Esophagus muscularis mucosa (tissue), 4 donors: ENCODE measurements at regions of chr2 and their contacts with region 1.

Region 1: GRCh38 chr2:167127135-167127534 is 238.9 kb downstream of the XIRP2 start:
- DNase-seq: no peak
- H3K4me3 ChIP-seq: no peak overlapping the region
- H3K27ac ChIP-seq: no peak overlapping the region
- H3K4me1 ChIP-seq: no peaks in the 10 kb centered on the region
- H3K27me3 ChIP-seq: no peaks in the 10 kb centered on the region
- CTCF ChIP-seq: peak in 1 of 3 experiments; percentile 14
- EP300 ChIP-seq: no peak
- POLR2A ChIP-seq: no peak

Region 2: DNA sequence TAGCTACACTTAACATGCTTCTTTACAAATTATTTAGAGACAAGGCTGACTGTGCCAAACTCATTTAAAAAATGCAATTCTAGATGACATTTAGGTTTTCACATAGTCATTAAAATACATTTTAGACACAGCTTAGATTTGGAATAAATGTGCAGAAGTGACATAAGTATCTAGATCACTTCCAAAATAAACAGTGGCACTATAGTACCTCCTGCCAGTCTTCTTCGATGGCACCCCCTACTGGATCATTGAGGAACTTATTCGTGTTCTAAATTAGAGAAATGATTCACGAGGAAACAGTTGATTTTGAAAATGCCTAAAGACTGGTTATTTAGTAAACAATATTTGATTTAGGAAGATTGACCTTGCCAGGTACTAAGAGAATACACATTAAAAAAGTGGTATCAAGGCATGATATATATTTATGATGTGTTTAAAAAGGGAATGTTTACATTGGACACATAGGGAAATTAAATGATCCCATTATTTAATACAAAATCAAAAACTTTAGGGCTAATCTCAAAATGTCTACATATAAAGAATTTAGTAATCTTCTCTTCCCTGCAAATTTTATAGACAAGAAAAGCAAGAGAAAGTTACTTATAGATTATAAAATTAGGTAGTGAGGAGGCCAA is 85.0 kb after region 1 on chr2:
- intact Hi-C with region 1: loop called (anchors 5 kb)
- DNase-seq: no peak
- H3K4me3 ChIP-seq: no peak overlapping the region
- H3K27ac ChIP-seq: no peak overlapping the region
- H3K4me1 ChIP-seq: peaks cover 0 to 15% (median 12%) of the 10 kb centered on the region in 4 donors
- H3K27me3 ChIP-seq: no peaks in the 10 kb centered on the region
- CTCF ChIP-seq: peak; percentile 64 to 84 (median 83)
- EP300 ChIP-seq: no peak
- POLR2A ChIP-seq: no peak

Region 3: DNA sequence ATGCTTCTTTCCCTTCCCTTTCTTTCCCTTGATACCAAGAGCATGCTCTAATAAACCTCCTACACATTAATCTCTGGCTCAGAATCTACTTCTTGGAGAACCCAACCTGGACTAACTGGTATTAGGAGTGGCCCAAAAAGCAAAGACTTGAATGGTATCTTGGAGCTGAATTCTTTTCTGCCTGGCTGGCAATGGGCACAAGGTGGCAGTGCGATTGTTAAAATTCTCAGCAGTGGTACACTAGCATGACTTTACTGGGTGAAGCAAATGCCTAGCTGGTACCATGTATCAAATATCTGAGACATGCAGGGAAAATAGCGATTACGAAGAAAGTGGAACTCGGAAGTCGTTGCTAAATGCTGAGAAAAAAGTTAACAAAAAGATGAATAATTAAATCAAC is 137.2 kb after region 1 on chr2:
- intact Hi-C with region 1: no loop called
- DNase-seq: no peak
- H3K4me3 ChIP-seq: no peak overlapping the region
- H3K27ac ChIP-seq: no peak overlapping the region
- H3K4me1 ChIP-seq: no peaks in the 10 kb centered on the region
- H3K27me3 ChIP-seq: no peaks in the 10 kb centered on the region
- CTCF ChIP-seq: no peak
- EP300 ChIP-seq: no peak
- POLR2A ChIP-seq: no peak